Vagina (tissue), 2 donors: ENCODE measurements at regions of chrX and their contacts with region 1.

Region 1: DNA sequence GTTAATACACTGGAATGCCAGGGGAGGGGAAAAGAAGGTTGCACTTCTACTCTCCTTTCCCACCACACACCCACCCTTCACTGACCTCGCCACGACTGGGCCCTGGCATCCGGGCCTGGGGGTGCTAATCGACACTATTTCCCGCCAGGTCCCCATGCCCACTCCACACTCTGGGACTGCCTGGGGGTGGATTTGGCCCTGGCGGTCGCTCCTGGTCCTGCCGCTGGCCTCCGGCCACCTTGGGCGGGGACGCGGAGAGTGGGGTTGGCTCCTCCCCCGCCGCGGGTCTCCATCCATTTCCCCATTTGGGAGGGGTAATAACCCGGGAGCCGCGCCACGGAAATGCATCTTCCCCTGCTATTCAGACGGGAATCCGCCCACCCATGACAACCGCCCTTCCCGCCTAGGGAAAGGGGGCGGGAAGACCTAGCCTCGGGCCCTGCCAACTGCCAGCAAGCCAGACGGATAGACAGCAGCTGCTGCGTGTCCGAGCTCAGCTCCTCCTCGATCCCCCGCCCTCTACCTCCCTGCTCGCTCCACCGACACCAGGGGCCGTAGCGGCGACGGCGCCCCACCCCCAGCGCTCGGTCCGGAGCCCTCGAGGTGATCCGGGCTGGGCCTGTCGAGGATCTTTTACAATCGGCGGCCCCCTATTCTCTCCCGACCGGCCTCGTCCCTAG is 78.1 kb downstream of the RLIM start:
- DNase-seq: peak; percentile 77 to 92
- H3K4me3 ChIP-seq: peak overlapping the region; percentile 40 to 47
- H3K27ac ChIP-seq: peak overlapping the region; percentile 81
- H3K4me1 ChIP-seq: peaks cover 7% of the 10 kb centered on the region
- H3K27me3 ChIP-seq: no peaks in the 10 kb centered on the region
- CTCF ChIP-seq: peak in 1 of 3 experiments; percentile 28
- POLR2A ChIP-seq: no peak

Region 2: GRCh38 chrX:74421036-74421739 is 115.1 kb before region 1 on chrX and contains the start of gene SLC16A2:
- intact Hi-C with region 1: loop called (anchors 10 kb)
- DNase-seq: no peak
- H3K4me3 ChIP-seq: peak within 1 kb of the TSS; percentile 44 to 55
- H3K27ac ChIP-seq: peak within 1 kb of the TSS; percentile 92
- H3K4me1 ChIP-seq: peaks cover 10% of the 10 kb centered on the region
- H3K27me3 ChIP-seq: no peaks in the 10 kb centered on the region
- CTCF ChIP-seq: no peak
- POLR2A ChIP-seq: peak in 1 of 2 donors; percentile 3
- total RNA-seq, gene SLC16A2: 6.9 TPM

Region 3: DNA sequence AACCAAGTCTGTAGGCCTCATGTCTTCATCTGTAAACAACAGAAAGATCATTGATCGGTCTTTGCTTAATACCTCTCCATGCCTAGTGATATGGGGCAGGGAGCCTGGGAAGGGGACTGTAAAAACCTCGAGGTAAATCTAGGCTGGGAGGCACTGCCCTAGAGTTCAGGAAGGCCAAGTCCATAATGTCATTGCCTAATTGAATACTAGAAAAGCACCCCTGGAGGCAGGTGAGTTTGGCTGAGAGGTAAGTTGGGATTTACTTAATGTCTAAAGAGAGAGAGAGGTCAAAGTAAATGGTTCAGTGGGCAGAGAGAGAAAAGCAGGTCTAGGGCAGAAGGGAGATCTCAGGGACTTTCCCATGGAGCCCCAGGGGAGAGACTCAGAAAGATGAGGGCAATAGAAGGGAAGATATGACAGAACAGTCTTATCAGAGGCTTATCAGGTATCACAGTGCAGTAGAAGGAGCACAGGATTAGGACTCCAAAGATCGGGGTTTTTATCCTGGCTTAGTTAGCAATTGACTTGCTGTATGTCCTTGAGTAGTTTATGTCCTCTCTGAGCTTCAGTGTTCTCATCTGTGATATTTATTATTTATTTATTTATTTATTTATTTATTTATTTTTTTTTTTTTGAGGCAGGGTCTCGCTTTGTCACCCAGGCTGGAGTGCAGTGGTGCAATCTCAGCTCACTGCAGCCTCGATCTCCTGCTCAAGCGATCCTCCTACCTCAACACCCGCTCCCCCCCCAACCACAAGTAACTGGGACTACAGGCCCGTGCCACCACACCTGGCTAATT is 29.8 kb before region 1 on chrX:
- intact Hi-C with region 1: no loop called
- DNase-seq: no peak
- H3K4me3 ChIP-seq: no peak overlapping the region
- H3K27ac ChIP-seq: no peak overlapping the region
- H3K4me1 ChIP-seq: no peaks in the 10 kb centered on the region
- H3K27me3 ChIP-seq: no peaks in the 10 kb centered on the region
- CTCF ChIP-seq: no peak
- POLR2A ChIP-seq: no peak

Region 4: DNA sequence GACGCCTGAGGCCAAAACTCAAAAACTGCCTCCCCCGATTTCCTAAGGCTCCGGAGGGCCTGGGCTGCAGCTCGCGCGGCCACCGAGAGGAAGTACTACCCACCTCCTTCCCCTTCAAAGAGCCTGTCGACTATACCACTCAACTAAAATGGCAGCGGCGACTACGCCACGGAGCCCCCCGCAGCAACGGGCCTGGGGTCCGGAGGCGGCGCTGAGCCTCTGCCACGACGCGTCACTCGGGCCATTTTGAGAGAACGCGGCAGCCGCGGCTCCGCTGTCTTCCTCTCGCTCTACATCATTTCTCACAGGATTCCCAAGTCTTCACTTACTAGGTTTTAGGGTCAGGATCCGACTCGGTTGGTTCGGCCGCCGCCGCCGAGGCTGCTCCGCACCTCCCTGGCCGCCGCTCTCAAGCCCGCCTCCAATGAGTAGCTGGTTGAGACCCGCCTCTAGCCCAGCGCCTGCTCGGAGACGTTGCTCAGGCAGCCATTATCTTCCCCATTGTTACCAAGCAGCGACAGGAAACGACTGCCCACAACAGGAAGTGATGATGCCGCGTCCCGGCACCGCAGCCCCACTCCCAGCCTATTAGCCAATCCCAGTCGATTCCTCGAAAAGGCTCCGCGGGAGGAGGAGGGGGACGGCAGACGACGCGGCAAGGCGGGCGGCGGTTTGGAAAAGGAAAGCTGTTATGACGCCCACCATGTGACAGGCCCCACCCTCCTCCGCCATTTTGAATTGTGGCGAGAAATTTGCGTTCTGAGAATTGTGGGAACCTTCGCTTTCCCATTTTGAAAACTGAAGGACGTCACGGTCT is 78.0 kb after region 1 on chrX and contains the start of gene RLIM:
- intact Hi-C with region 1: loop called (anchors 1 kb)
- DNase-seq: peak in 1 of 2 donors; percentile 97
- H3K4me3 ChIP-seq: peak within 1 kb of the TSS; percentile 60 to 71
- H3K27ac ChIP-seq: peak within 1 kb of the TSS; percentile 86
- H3K4me1 ChIP-seq: no peaks in the 10 kb centered on the region
- H3K27me3 ChIP-seq: no peaks in the 10 kb centered on the region
- CTCF ChIP-seq: no peak
- POLR2A ChIP-seq: peak in 1 of 2 donors; percentile 66
- total RNA-seq, gene RLIM: 22.1 TPM